Gastrocnemius medialis (tissue), 4 donors: ENCODE measurements at regions of chr14 and their contacts with region 1.

Region 1: GRCh38 chr14:60648934-60649874 is at the start of gene SIX1:
- DNase-seq: peak; percentile 88 to 89
- ATAC-seq: peak; percentile 33 to 45
- H3K4me3 ChIP-seq: peak within 1 kb of the TSS; percentile 86 to 90 (median 88)
- H3K27ac ChIP-seq: peak within 1 kb of the TSS; percentile 93 to 98 (median 95)
- H3K4me1 ChIP-seq: peaks cover 31 to 38% of the 10 kb centered on the region in 2 donors
- H3K27me3 ChIP-seq: no peaks in the 10 kb centered on the region
- CTCF ChIP-seq: no peak
- POLR2A ChIP-seq: peak; percentile 97 to 99
- total RNA-seq, gene SIX1: 28.3 to 76.4 (median 56.3) TPM

Region 2: GRCh38 chr14:60164712-60165546 is 484.3 kb before region 1 on chr14 and contains the start of gene DHRS7:
- in situ Hi-C with region 1: no loop called
- intact Hi-C with region 1: loop called (anchors 5 kb)
- DNase-seq: peak; percentile 72 to 83
- ATAC-seq: peak; percentile 42
- H3K4me3 ChIP-seq: peak within 1 kb of the TSS; percentile 81 to 95 (median 92)
- H3K27ac ChIP-seq: peak within 1 kb of the TSS; percentile 97 to 100 (median 99)
- H3K4me1 ChIP-seq: peaks cover 33 to 52% of the 10 kb centered on the region in 2 donors
- H3K27me3 ChIP-seq: no peaks in the 10 kb centered on the region
- CTCF ChIP-seq: peak in 4 of 5 experiments; percentile 32 to 68 (median 40)
- POLR2A ChIP-seq: peak; percentile 71 to 88
- total RNA-seq, gene DHRS7: 937 to 2,179 (median 1,242) TPM

Region 3: GRCh38 chr14:60455875-60456274 is 193.3 kb before region 1 on chr14:
- in situ Hi-C with region 1: no loop called
- intact Hi-C with region 1: no loop called
- DNase-seq: no peak
- ATAC-seq: no peak
- H3K4me3 ChIP-seq: no peak overlapping the region
- H3K27ac ChIP-seq: no peak overlapping the region
- H3K4me1 ChIP-seq: no peaks in the 10 kb centered on the region
- H3K27me3 ChIP-seq: no peaks in the 10 kb centered on the region
- CTCF ChIP-seq: no peak
- POLR2A ChIP-seq: no peak

Region 4: GRCh38 chr14:60622917-60623257 is 26.3 kb before region 1 on chr14:
- in situ Hi-C with region 1: no loop called
- intact Hi-C with region 1: loop called (anchors 2 kb)
- DNase-seq: no peak
- ATAC-seq: no peak
- H3K4me3 ChIP-seq: no peak overlapping the region
- H3K27ac ChIP-seq: peak overlapping the region in 2 of 4 donors; percentile 35 to 48
- H3K4me1 ChIP-seq: peaks cover 15 to 19% of the 10 kb centered on the region in 2 donors
- H3K27me3 ChIP-seq: no peaks in the 10 kb centered on the region
- CTCF ChIP-seq: no peak
- POLR2A ChIP-seq: no peak

Region 5: GRCh38 chr14:60980811-60981632 is 331.8 kb after region 1 on chr14 and contains the starts of genes SLC38A6 and TRMT5:
- in situ Hi-C with region 1: loop called in 1 of 4 experiments (anchors 25 kb)
- intact Hi-C with region 1: loop called (anchors 5 kb)
- DNase-seq: peak; percentile 92 to 94
- ATAC-seq: peak; percentile 86 to 92
- H3K4me3 ChIP-seq: peak within 1 kb of the TSS; percentile 69 to 90 (median 83)
- H3K27ac ChIP-seq: peak within 1 kb of the TSS; percentile 88 to 95 (median 90)
- H3K4me1 ChIP-seq: peaks cover 56 to 57% of the 10 kb centered on the region in 2 donors
- H3K27me3 ChIP-seq: no peaks in the 10 kb centered on the region
- CTCF ChIP-seq: peak in 1 of 5 experiments; percentile 30
- POLR2A ChIP-seq: peak; percentile 48 to 58
- total RNA-seq, gene SLC38A6: 4.0 to 22.6 (median 7.0) TPM
- total RNA-seq, gene TRMT5: 5.9 to 7.6 (median 6.5) TPM

Region 6: DNA sequence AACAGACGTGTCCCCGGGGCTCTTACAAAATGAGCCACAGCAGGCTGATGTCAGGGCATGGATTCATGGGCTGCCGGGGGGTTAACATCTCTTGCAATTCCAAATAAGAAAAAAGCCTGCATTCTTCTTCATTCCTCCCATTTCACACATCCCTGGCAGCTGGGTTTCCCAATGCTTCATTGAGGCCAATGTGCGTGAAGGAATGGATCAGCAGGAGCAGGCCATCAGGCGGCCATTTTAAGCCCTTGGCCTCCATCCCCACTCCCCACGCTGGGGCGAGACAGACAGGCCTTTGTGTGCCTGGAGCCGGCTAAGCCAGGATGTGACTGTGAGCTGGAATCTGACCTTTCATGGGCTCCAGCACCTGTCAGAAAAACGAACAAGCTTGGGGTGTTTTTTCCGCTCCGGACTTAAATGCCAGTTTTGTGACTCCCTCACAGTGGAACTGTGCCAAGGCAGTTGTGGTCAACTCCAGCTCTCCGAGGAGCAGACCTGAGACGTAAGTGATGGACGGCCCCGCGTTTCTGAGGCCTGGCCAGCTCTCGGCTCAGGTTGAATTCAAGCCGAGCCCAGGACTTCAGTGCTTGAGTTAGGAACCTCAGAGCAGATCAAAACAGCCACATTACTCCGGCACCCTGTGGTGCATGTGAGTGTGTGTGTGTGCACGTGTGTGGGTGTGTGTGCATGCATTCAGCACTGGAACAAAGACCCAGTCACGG is 498.8 kb after region 1 on chr14:
- in situ Hi-C with region 1: no loop called
- intact Hi-C with region 1: loop called (anchors 5 kb)
- DNase-seq: peak; percentile 77 to 89
- ATAC-seq: peak; percentile 44 to 65
- H3K4me3 ChIP-seq: peak overlapping the region in 3 of 4 donors; percentile 3 to 27 (median 16)
- H3K27ac ChIP-seq: peak overlapping the region; percentile 84 to 95 (median 88)
- H3K4me1 ChIP-seq: peaks cover 35 to 43% of the 10 kb centered on the region in 2 donors
- H3K27me3 ChIP-seq: no peaks in the 10 kb centered on the region
- CTCF ChIP-seq: no peak
- POLR2A ChIP-seq: no peak